Posterior cingulate gyrus (tissue), 11 donors: ENCODE measurements at regions of chr4 and their contacts with region 1.

Region 1: DNA sequence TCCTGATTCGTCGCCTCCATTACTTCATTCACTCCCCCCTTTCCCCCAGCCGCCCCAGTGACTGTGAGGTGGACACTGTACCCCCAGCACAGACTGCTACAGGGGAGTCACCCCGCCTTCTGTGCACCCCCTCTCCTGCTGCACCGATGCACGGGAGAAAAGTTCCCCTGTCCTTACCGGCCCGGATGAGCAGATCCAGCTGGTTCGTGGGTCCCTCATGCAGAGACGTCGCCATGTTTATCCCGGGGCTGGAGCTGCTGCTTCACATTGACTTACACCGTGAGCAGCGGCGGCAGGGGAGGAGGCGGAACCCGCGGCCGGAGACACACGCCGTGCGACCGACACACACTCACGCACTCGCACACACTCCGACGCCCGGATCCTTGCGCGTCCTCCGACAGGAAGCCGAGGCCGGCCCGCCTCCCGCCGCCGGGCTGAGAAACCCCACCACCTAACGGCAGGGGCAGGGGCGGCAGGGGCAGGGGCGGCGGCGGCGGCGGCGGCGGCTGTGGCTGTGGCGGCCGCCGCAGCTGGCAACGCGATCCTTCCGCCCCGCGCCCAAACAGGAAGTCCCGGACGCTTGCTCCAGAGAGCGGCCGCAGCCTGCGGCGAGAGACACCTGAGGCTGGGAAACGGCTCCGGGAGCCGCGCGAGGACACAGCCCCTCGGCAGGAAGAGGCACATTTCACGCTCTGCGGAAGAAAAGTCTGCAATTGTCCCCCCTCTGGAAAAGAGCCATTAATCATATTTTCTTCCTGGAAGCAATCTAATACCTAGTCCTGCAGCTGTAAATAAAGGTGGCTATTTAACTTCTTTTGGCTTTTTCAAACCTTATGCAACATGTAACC is 68.6 kb downstream of the NOCT start:
- DNase-seq: peak; percentile 68 to 98 (median 86)

Region 2: DNA sequence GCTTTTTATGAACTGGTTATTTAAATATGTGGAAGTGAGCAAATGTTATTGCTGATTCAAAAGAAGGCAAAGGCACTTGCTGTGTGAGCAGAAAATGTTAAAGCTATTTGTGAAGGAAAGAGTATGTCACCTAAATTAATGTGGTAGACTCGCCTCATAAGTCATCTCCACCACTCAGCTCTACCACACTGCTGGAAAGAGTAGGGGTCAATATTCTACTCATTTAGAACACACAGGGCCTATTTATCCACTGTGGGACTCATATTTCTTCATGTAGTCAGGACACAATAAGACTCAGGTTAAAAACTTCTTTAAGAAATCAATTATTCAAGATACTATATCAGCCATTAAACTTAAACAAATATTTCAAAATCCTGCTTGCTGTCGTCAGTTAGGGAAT is 948.6 kb before region 1 on chr4:
- intact Hi-C with region 1: no loop called
- DNase-seq: no peak

Region 3: GRCh38 chr4:138870737-138871554 is 213.2 kb before region 1 on chr4:
- intact Hi-C with region 1: no loop called
- DNase-seq: peak in 9 of 10 donors; percentile 31 to 89 (median 73)

Region 4: GRCh38 chr4:139015269-139015947 is 68.8 kb before region 1 on chr4 and contains the start of gene NOCT:
- intact Hi-C with region 1: loop called (anchors 5 kb)
- DNase-seq: peak; percentile 74 to 97 (median 82)

Region 5: DNA sequence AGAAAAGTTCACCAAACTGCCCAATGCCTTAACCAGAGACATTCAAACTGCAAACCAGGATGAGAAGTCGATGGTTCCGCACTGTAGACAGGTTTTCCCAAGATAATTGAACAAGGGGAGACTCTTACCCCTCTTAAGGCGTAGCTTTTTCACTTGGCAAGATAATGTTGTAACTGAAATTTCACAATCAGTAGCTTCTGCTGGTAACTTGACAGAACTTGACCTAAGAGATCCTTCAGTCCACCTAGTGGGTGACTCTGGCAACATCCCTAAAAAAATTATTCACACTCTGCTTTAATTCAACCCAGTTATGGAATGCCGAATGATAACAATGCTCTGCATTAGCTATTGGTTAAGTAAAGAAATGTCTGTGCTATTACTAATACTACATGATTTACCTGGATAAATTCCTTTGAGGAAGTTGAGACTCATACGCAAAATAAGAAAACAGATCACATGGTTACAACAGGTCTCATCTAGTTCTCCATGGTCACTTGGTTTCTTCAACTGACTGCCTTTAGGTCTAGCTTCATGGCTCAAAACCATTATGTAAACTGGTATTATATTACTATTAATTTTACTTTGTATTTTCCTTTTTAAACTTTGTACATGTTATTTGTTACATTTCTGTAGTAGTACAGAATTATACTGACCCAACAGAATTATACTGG is 83.7 kb after region 1 on chr4:
- intact Hi-C with region 1: no loop called
- DNase-seq: no peak

Region 6: DNA sequence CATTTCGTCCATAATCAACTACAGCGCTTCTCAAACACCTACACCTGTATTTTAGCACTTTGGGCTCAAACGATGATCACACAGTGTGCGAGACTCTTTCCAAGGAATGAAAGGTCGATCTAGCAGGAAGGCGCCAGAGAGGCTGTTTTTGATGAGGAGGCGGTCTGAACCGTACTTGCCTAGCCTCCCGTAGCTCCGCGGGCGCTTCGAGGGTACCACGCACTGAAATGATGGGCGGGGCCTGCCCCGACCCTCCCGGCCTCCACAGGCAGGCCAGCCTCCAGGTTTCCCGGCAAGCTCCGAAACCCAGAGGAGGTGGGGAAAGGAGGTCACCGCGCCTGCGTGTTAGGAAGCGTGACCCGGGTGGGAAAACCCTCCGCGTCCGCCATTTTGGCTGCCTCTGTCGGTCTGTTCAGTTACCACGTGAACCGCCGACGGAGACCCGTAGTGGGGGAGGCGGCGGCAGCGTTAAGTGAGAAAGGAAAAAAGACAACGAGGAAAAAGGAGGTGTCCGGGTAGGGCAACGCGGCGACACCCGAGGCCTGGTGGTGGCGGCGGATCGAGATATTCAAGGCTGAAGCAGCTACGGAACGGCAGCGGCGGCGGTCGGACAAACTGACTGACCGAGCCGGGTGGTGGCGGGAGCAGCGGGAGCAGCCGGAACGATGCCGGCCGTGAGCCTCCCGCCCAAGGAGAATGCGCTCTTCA is 217.1 kb after region 1 on chr4 and contains the start of gene NAA15:
- intact Hi-C with region 1: loop called (anchors 5 kb)
- DNase-seq: peak; percentile 94 to 99 (median 97)